AG04450 (cell line): ENCODE measurements at regions of chr6 and their contacts with region 1.

Region 1: GRCh38 chr6:90044833-90045381 is 150.6 kb downstream of the GJA10 start:
- DNase-seq: no peak
- H3K4me3 ChIP-seq: no peak overlapping the region
- H3K27ac ChIP-seq: peak overlapping the region; percentile 21
- H3K27me3 ChIP-seq: no peaks in the 10 kb centered on the region
- CTCF ChIP-seq: no peak

Region 2: GRCh38 chr6:89984926-89985750 is 59.8 kb before region 1 on chr6:
- CTCF ChIA-PET with region 1: interaction called, 10 read pairs
- POLR2A ChIA-PET with region 1: no interaction called
- DNase-seq: no peak
- H3K4me3 ChIP-seq: no peak overlapping the region
- H3K27ac ChIP-seq: peak overlapping the region; percentile 94
- H3K27me3 ChIP-seq: no peaks in the 10 kb centered on the region
- CTCF ChIP-seq: no peak

Region 3: DNA sequence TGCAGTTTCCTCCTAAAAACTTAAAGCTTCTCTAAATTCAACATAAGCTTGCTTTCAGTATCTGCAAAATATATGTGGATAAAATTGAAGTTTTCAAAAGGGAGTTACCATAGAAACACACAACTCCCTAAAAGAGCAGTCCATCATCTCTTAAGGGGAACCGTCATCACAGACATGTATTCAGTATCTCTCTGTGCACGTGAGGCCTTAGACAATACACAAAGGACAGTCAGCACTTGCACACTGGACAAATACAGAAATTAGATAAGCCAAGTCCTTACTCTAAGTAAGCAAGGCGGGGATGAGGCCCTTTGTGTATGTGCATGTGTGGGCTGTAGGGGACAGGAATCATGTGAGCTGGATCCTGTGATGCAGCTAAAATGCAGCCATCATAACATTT is 115.1 kb after region 1 on chr6:
- CTCF ChIA-PET with region 1: no interaction called
- POLR2A ChIA-PET with region 1: no interaction called
- DNase-seq: no peak
- H3K4me3 ChIP-seq: no peak overlapping the region
- H3K27ac ChIP-seq: no peak overlapping the region
- H3K27me3 ChIP-seq: no peaks in the 10 kb centered on the region
- CTCF ChIP-seq: no peak